SK-N-SH (cell line): ENCODE measurements at regions of chr3 and their contacts with region 1.

Region 1: DNA sequence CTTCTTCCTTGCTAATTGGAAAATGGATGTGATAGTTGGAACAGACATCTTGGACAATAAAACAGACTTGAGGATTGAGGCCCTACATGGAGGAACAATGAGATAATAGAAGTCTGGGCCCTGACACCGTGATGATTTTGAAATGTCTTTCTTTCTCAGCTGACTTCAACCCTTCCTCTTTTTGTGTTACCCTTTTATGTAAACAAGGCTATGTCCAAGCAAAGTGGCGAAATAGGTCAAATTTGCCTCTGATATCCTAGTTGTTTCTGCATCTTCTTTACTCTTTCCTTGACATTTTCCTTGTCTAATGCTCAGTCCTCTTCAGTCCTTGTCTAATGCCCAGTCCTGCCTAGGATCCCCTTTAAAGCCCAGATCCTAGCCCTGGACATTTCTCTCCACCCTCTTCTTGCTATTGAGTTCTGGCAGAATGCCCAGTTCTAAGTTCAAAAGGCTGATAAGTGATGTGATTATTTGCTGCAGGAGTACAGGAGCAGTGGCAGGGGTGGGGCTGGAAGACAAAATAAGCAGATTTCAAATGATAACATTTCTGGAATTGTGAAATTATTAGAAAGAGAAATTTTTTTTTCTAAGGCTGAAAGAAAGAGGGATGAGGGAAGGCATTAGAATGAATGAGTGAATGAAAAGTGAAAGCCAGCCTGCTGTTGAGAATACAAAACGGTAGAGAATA is 6.5 kb upstream of the VPS8 start:
- DNase-seq: peak; percentile 69
- H3K4me3 ChIP-seq: no peak overlapping the region
- H3K27ac ChIP-seq: no peak overlapping the region
- H3K4me1 ChIP-seq: peaks cover 0 to 9% of the 10 kb centered on the region in 2 experiments; a peak in 2 of 4 replicates
- H3K27me3 ChIP-seq: no peaks in the 10 kb centered on the region; the same call in 1 of the 2 replicates
- CTCF ChIP-seq: no peak
- EP300 ChIP-seq: peak in 1 of 2 experiments; percentile 35; a peak in 1 of 4 replicates
- RAD21 ChIP-seq: no peak; the same call in 1 of the 2 replicates

Region 2: GRCh38 chr3:184636741-184637316 is 168.7 kb before region 1 on chr3:
- CTCF ChIA-PET with region 1: no interaction called
- POLR2A ChIA-PET with region 1: no interaction called
- DNase-seq: peak; percentile 38
- H3K4me3 ChIP-seq: no peak overlapping the region
- H3K27ac ChIP-seq: no peak overlapping the region
- H3K4me1 ChIP-seq: peaks cover 0 to 25% of the 10 kb centered on the region in 2 experiments; a peak in 2 of 4 replicates
- H3K27me3 ChIP-seq: no peaks in the 10 kb centered on the region
- CTCF ChIP-seq: no peak
- EP300 ChIP-seq: peak in 1 of 2 experiments; percentile 53; a peak in 2 of 4 replicates
- RAD21 ChIP-seq: no peak

Region 3: DNA sequence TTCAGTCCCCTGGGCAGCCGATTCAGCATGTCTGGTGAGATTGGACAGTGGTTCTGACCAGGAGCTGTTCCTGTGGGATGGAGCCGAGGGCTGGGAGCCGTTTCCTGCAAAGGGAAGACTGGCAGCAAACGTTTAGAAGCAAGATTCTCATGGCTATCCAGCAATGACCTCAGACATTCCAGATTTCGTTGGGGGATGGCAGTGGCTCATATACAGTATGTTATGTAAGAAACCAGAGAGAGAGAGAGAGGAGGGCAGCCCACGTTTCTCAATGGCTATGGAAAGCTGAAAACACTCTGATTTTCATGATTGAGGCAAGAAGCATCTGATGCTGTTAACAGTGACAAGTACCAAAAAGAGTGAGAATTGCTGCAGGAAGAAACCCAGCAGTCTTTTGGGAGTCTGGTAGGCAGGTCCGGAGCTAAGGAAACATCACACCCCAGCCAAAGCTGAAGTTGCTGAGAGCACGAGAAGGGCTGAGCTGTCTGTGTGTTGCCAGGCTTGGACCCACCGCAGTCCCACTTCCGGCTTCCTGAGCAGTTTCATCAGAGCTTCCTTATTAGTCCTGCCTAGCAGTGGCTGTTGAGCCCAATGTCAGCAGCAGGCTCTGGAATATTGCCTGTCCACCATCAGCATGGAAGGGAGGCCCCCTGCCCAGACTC is 19.1 kb before region 1 on chr3:
- CTCF ChIA-PET with region 1: interaction called, 22 read pairs
- POLR2A ChIA-PET with region 1: no interaction called
- DNase-seq: peak; percentile 25
- H3K4me3 ChIP-seq: no peak overlapping the region
- H3K27ac ChIP-seq: no peak overlapping the region
- H3K4me1 ChIP-seq: peaks cover 0 to 13% of the 10 kb centered on the region in 2 experiments; a peak in 2 of 4 replicates
- H3K27me3 ChIP-seq: 0 out of 2 replicates have a peak, but pooled peaks cover 4% of the 10 kb centered on the region
- CTCF ChIP-seq: no peak
- EP300 ChIP-seq: no peak
- RAD21 ChIP-seq: no peak